Mammary epithelial cell (primary cell): ENCODE measurements at regions of chr16 and their contacts with region 1.

Region 1: DNA sequence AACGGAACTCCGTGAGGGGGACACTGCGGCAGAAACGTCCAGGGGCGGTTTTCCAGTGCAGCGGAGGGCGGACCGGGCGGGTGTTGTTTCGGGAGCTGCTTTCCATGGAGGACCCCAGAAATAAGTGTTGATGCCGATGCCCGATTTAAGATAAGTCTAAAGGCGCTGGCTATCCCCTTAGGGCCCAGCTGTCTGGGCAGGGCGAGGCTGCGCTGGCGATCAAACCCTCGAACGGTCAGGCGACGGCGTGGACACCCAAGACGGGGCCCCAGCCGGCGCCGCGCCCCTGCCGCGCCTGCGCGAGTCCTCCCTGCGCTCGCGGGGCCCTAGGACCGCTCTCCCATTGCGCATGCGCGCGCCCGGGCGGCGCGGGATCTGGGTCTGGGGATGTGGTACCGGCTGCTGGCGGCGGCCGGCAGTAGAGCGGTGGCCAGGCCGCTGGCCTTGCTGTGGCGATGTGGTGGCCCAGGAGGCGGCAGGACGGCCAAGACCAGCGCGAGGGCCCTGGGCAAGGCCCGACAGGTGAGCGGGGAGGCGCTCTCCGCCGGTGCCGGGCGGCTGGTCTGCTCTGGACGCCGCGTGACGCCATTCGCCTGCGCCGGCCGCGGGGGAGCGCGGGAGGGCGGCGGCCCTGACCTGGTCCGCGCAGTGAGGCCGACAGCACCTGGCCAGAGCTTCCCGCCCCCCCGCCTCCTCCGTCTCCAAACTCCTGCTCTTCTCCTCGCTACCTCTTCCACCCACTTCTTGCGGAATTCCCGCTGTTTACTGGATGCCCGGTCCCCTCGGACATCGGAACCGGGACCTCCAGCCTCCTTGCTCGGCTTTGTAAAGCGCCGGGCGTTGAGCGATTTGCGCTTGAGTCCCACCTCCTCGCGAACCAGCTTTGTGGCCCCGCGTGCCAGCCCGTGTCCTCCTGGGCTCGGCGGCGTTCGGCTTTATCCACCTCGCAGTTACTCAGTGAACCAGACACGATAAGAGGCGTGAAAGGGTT is 24.0 kb downstream of the DEF8 start:
- DNase-seq: peak; percentile 87
- H3K4me3 ChIP-seq: peak overlapping the region; percentile 93 to 99 (median 99)
- H3K27ac ChIP-seq: peak overlapping the region; percentile 84
- H3K4me1 ChIP-seq: peaks cover 16% of the 10 kb centered on the region
- H3K27me3 ChIP-seq: no peaks in the 10 kb centered on the region
- CTCF ChIP-seq: no peak

Region 2: DNA sequence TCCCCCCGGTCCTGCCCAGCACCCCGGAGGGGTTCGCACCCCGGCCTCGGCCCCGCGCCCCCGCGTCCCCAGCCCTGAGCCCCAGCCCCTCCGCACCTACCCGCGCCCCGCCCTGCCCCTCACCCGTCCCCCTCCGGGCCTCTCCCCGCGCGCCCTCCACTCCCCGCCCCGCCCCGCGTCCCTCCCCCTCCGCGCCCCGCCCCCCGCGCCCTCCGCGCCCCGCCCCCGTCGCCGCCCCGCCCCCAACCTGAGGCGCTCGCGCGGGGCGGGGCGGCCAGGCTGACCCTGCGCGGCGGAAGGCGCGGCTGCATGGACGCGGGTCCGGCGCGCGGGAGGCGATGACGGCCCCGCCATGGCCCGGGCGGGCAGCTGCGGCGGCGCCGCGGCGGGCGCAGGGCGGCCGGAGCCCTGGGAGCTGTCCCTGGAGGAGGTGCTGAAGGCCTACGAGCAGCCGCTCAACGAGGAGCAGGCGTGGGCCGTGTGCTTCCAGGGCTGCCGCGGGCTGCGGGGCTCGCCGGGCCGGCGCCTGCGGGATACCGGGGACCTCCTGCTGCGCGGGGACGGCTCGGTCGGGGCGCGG is 144.2 kb before region 1 on chr16 and contains the start of gene SPIRE2:
- CTCF ChIA-PET with region 1: no interaction called
- dilution Hi-C with region 1: no loop called
- in situ Hi-C with region 1: no loop called
- intact Hi-C with region 1: no loop called
- DNase-seq: peak; percentile 58
- H3K4me3 ChIP-seq: peak within 1 kb of the TSS; percentile 36 to 53 (median 52)
- H3K27ac ChIP-seq: no peak within 1 kb of the TSS
- H3K4me1 ChIP-seq: peaks cover 14% of the 10 kb centered on the region
- H3K27me3 ChIP-seq: no peaks in the 10 kb centered on the region
- CTCF ChIP-seq: no peak
- total RNA-seq, gene SPIRE2: 1.7 to 7.1 TPM

Region 3: DNA sequence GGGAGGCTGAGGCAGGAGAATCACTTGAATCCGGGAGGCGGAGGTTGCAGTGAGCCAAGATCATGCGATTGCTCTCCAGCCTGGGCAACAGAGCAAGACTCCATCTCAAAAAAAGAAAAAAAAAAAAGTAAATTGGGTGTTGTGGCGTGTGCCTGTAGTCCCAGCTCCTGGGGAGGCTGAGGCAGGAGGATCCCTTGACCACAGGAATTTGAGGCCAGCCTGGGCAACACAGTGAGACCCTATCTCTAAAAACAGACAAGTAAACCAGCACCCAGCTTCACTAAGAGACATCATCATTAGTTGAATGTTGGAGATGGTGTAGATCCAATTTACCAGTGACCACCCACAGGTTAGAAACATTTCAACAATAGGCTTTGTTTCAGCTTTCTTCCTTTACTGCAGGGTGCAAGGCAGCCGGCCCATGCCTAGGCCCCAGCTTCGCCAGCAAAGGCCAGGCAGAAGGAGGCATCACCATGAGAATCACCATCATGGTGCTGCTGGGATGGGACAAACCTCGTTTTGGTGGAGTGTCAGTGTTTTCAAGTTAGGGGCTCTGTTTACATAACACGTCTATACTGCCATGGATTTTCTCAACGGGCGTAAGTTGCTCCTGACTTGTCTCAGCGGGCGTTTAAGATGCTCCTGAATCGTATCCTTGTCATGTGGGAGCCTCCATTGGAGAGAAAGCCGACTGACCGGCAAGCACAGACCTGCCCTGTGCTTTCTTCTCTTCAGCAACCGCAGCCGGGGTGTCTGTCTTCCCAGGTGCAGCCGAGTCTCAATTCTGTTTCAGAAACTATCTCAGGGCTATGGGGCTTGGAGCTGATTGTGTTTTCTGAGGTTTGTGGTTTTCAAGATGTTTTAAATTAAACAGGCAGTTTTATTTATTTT is 91.8 kb before region 1 on chr16:
- CTCF ChIA-PET with region 1: no interaction called
- dilution Hi-C with region 1: loop called (anchors 5 kb)
- in situ Hi-C with region 1: no loop called
- intact Hi-C with region 1: loop called (anchors 10 kb)
- DNase-seq: peak; percentile 93
- H3K4me3 ChIP-seq: no peak overlapping the region
- H3K27ac ChIP-seq: peak overlapping the region; percentile 56
- H3K4me1 ChIP-seq: peaks cover 16% of the 10 kb centered on the region
- H3K27me3 ChIP-seq: no peaks in the 10 kb centered on the region
- CTCF ChIP-seq: no peak

Region 4: DNA sequence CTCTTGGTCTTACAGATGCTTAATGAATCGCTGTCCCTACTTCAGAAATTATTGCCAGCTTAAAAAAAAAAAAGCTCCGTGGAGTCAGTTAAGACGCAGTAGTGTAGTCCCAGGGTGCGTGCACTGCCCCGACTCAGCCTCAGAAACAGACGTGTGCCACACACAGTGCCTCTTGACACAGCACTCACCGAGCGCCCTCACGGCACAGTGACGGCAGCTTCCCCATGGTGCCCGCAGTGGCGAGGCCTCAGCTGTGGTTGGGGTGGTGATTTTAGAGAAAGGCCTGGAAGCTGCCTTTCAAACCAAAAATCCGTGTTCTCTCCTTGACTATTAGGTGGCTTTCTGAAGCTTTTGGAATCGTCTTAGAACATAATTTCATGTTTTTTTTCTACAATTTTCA is 85.3 kb before region 1 on chr16:
- CTCF ChIA-PET with region 1: no interaction called
- dilution Hi-C with region 1: loop called (anchors 5 kb)
- in situ Hi-C with region 1: no loop called
- intact Hi-C with region 1: loop called (anchors 10 kb)
- DNase-seq: no peak
- H3K4me3 ChIP-seq: no peak overlapping the region
- H3K27ac ChIP-seq: no peak overlapping the region
- H3K4me1 ChIP-seq: no peaks in the 10 kb centered on the region
- H3K27me3 ChIP-seq: no peaks in the 10 kb centered on the region
- CTCF ChIP-seq: no peak

Region 5: GRCh38 chr16:89917773-89918452 is 54.6 kb before region 1 on chr16:
- CTCF ChIA-PET with region 1: no interaction called
- dilution Hi-C with region 1: no loop called
- in situ Hi-C with region 1: loop called in 1 of 2 experiments (anchors 10 kb)
- intact Hi-C with region 1: no loop called
- DNase-seq: peak; percentile 39
- H3K4me3 ChIP-seq: peak overlapping the region in 1 of 3 experiments; percentile 29
- H3K27ac ChIP-seq: no peak overlapping the region
- H3K4me1 ChIP-seq: peaks cover 41% of the 10 kb centered on the region
- H3K27me3 ChIP-seq: no peaks in the 10 kb centered on the region
- CTCF ChIP-seq: no peak

Region 6: DNA sequence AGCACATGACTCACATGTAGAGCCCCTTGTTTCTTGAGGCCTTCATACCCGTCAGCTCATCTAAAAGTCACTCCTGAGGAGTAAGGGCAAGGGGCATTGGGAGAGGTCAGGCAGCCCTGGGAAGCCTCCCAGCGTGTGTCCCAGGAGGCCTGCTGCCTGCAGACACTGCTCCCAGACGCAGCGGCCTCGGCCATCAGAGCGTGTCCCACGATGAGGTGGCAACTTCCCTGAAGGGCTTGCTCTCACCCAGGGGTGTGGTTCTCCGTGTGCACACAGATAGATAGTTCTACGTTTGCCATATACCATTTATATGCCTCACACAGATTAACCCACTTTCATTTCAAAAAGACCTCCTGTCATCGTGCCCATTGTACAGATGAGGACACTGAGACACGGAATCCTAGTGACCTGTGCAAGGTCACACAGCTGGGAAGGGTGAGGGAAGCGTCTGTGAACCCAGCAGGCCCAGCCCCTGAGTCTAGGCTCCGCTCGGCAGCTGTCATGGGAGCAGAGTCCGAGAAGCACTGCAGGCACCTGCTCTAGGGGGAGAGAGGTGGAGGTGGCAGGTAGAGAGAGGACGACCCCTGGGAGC is 41.1 kb before region 1 on chr16:
- CTCF ChIA-PET with region 1: no interaction called
- dilution Hi-C with region 1: loop called (anchors 5 kb)
- in situ Hi-C with region 1: no loop called
- intact Hi-C with region 1: no loop called
- DNase-seq: no peak
- H3K4me3 ChIP-seq: no peak overlapping the region
- H3K27ac ChIP-seq: no peak overlapping the region
- H3K4me1 ChIP-seq: no peaks in the 10 kb centered on the region
- H3K27me3 ChIP-seq: no peaks in the 10 kb centered on the region
- CTCF ChIP-seq: no peak

Region 7: GRCh38 chr16:90044111-90044558 is 71.6 kb after region 1 on chr16:
- CTCF ChIA-PET with region 1: no interaction called
- dilution Hi-C with region 1: loop called (anchors 5 kb)
- in situ Hi-C with region 1: no loop called
- intact Hi-C with region 1: no loop called
- DNase-seq: peak; percentile 95
- H3K4me3 ChIP-seq: no peak overlapping the region
- H3K27ac ChIP-seq: peak overlapping the region; percentile 45
- H3K4me1 ChIP-seq: peaks cover 29% of the 10 kb centered on the region
- H3K27me3 ChIP-seq: no peaks in the 10 kb centered on the region
- CTCF ChIP-seq: no peak